Activated CD4-positive, alpha-beta memory T cell treated with anti-CD3 and anti-CD28 coated beads for 36 hours (primary cell): ENCODE measurements at regions of chr5 and their contacts with region 1.

Region 1: GRCh38 chr5:88690409-88691229 is 192.4 kb downstream of the MEF2C start:
- DNase-seq: peak; percentile 73
- H3K4me3 Mint-ChIP-seq: peak overlapping the region; percentile 68
- H3K27ac Mint-ChIP-seq: peak overlapping the region; percentile 74
- H3K4me1 Mint-ChIP-seq: peaks cover 25% of the 10 kb centered on the region
- H3K27me3 Mint-ChIP-seq: peaks cover 84% of the 10 kb centered on the region

Region 2: DNA sequence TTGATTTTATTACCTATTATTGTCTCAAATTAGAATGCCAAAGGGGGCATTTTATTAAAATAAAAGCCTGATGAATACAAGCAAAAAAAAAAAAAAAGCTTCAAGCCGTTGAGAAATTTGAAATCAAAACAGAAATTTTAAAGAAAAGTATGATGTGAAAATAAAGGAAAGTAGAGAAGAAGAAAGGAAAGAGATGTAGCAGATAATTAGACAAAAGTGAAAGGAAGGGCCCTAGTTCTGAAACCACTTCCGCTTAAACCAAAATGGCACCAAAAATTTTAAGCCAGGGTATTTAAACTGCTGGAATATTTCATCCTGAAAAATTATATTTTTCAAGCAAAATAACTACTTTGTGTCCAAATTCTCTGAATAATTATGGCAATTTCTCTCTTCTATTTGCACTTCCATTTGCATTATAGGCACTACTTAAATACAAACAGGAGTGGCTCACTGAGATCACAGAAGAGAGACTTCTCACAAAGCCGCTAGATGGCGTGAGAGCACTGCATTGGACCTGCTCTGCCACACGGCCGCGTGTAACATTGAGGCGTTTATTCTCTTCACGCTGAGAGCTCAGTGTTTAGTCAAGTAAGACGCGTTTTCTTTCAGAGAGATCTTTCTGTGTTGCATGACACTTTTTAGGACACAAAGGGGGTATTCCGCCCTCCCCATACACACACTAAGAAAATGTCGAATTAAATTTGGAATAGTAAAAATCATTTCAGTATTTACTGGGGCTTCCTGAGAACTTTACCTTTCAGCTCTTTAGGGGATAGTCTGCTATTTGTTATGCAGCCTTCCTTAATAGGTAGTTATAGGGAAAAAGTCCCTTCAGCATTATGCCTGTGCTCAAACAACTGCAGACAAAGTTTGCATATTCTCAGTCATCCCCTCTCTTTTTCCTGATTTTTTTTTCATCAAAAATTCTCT is 909.5 kb before region 1 on chr5:
- CTCF ChIA-PET with region 1: interaction called, 123 read pairs
- POLR2A ChIA-PET with region 1: no interaction called
- intact Hi-C with region 1: loop called (anchors 1 kb)
- DNase-seq: peak; percentile 82
- H3K4me3 Mint-ChIP-seq: no peak overlapping the region
- H3K27ac Mint-ChIP-seq: no peak overlapping the region
- H3K4me1 Mint-ChIP-seq: no peaks in the 10 kb centered on the region
- H3K27me3 Mint-ChIP-seq: peaks cover 18% of the 10 kb centered on the region

Region 3: GRCh38 chr5:88660947-88661805 is 29.4 kb before region 1 on chr5:
- CTCF ChIA-PET with region 1: interaction called, 25 read pairs
- POLR2A ChIA-PET with region 1: no interaction called
- intact Hi-C with region 1: loop called (anchors 2 kb)
- DNase-seq: peak; percentile 54
- H3K4me3 Mint-ChIP-seq: peak overlapping the region; percentile 49
- H3K27ac Mint-ChIP-seq: no peak overlapping the region
- H3K4me1 Mint-ChIP-seq: peaks cover 21% of the 10 kb centered on the region
- H3K27me3 Mint-ChIP-seq: peaks cover 64% of the 10 kb centered on the region

Region 4: GRCh38 chr5:88666761-88667495 is 23.7 kb before region 1 on chr5:
- CTCF ChIA-PET with region 1: interaction called, 15 read pairs
- POLR2A ChIA-PET with region 1: no interaction called
- intact Hi-C with region 1: loop called (anchors 2 kb)
- DNase-seq: no peak
- H3K4me3 Mint-ChIP-seq: peak overlapping the region; percentile 71
- H3K27ac Mint-ChIP-seq: no peak overlapping the region
- H3K4me1 Mint-ChIP-seq: peaks cover 29% of the 10 kb centered on the region
- H3K27me3 Mint-ChIP-seq: peaks cover 75% of the 10 kb centered on the region

Region 5: GRCh38 chr5:88724201-88724600 is 33.6 kb after region 1 on chr5:
- CTCF ChIA-PET with region 1: interaction called, 10 read pairs
- POLR2A ChIA-PET with region 1: no interaction called
- intact Hi-C with region 1: no loop called
- DNase-seq: no peak
- H3K4me3 Mint-ChIP-seq: no peak overlapping the region
- H3K27ac Mint-ChIP-seq: no peak overlapping the region
- H3K4me1 Mint-ChIP-seq: no peaks in the 10 kb centered on the region
- H3K27me3 Mint-ChIP-seq: peaks cover 23% of the 10 kb centered on the region

Region 6: DNA sequence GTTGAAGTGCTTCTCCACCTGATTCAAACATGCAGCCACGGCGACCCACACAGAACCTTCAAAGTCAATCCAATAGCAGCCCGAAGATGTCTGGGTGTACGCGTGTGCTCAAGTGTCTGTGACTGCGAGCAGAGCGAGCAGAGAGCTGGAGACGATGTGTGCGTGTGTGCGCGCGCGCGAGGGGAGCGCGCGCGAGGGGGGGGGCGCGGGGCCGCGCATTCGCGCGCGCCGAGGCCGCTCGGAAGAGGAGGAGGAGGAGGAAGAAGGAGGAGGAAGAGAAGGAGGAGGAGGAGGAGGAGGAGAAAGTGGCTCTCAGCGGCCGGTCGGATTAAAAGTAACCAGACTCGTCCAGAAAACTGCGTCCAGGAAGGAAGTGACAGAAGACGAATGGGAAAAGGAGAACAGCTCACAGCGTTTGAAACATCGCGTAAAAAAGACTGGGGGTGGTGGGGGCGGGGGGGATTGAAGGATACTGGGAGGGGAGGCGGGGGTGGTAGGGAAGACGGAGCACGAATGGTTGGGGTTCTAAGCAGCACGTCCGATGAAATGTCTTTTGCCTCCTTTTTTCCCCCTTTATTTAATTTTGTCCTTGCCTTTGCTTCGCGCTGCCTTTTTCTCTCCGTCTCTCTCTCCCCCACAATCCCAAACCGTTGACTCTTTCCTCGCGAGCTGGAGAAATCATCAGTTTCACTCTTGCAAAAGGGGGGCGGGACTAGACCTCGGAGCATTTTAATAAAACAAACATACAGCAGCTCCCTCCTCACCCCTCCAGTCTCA is 192.6 kb after region 1 on chr5 and contains the start of gene MEF2C:
- CTCF ChIA-PET with region 1: interaction called, 3 read pairs
- POLR2A ChIA-PET with region 1: no interaction called
- intact Hi-C with region 1: loop called (anchors 5 kb)
- DNase-seq: peak; percentile 13
- H3K4me3 Mint-ChIP-seq: peak within 1 kb of the TSS; percentile 72
- H3K27ac Mint-ChIP-seq: no peak within 1 kb of the TSS
- H3K4me1 Mint-ChIP-seq: peaks cover 19% of the 10 kb centered on the region
- H3K27me3 Mint-ChIP-seq: peaks cover 45% of the 10 kb centered on the region
- total RNA-seq, gene MEF2C: 0.02 TPM